Activated B cell treated with CpG ODN at 0.5 μM for 24 hours (primary cell): ENCODE measurements at regions of chr2 and their contacts with region 1.

Region 1: GRCh38 chr2:68909793-68910674 is 38.8 kb upstream of the BMP10 start:
- DNase-seq: peak; percentile 45
- ATAC-seq: peak; percentile 58
- H3K4me3 Mint-ChIP-seq: no peak overlapping the region
- H3K27ac Mint-ChIP-seq: peak overlapping the region; percentile 60
- H3K4me1 Mint-ChIP-seq: peaks cover 34% of the 10 kb centered on the region
- H3K27me3 Mint-ChIP-seq: no peaks in the 10 kb centered on the region
- CTCF ChIP-seq: no peak

Region 2: DNA sequence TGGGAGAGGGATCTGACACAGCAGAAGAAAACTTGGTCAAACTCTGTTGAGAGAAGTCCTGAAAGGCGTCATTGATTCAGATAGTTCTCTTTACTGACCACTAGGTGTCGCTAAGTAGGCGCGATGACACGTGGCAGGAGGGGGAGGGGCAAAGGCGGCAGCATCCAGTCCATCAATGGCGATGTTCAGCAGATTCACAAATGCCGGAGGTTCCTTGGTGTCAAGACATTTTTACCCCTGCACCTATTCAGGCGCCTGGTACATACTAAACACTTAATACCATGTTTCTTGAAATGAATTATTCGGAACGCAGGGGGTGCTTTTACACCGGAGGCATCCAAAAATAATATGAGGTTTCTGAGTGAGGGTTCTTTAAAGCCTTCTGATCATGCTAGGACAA is 548.0 kb before region 1 on chr2:
- CTCF ChIA-PET with region 1: no interaction called
- POLR2A ChIA-PET with region 1: no interaction called
- intact Hi-C with region 1: loop called (anchors 5 kb)
- DNase-seq: peak; percentile 63
- ATAC-seq: peak; percentile 66
- H3K4me3 Mint-ChIP-seq: peak overlapping the region; percentile 84
- H3K27ac Mint-ChIP-seq: peak overlapping the region; percentile 91
- H3K4me1 Mint-ChIP-seq: peaks cover 56% of the 10 kb centered on the region
- H3K27me3 Mint-ChIP-seq: no peaks in the 10 kb centered on the region
- CTCF ChIP-seq: peak; percentile 33

Region 3: GRCh38 chr2:68709421-68709911 is 200.6 kb before region 1 on chr2:
- CTCF ChIA-PET with region 1: interaction called, 72 read pairs
- POLR2A ChIA-PET with region 1: interaction called, 9 read pairs
- intact Hi-C with region 1: loop called (anchors 1 kb)
- DNase-seq: no peak
- ATAC-seq: peak; percentile 71
- H3K4me3 Mint-ChIP-seq: no peak overlapping the region
- H3K27ac Mint-ChIP-seq: peak overlapping the region; percentile 6
- H3K4me1 Mint-ChIP-seq: peaks cover 39% of the 10 kb centered on the region
- H3K27me3 Mint-ChIP-seq: no peaks in the 10 kb centered on the region
- CTCF ChIP-seq: peak; percentile 51

Region 4: DNA sequence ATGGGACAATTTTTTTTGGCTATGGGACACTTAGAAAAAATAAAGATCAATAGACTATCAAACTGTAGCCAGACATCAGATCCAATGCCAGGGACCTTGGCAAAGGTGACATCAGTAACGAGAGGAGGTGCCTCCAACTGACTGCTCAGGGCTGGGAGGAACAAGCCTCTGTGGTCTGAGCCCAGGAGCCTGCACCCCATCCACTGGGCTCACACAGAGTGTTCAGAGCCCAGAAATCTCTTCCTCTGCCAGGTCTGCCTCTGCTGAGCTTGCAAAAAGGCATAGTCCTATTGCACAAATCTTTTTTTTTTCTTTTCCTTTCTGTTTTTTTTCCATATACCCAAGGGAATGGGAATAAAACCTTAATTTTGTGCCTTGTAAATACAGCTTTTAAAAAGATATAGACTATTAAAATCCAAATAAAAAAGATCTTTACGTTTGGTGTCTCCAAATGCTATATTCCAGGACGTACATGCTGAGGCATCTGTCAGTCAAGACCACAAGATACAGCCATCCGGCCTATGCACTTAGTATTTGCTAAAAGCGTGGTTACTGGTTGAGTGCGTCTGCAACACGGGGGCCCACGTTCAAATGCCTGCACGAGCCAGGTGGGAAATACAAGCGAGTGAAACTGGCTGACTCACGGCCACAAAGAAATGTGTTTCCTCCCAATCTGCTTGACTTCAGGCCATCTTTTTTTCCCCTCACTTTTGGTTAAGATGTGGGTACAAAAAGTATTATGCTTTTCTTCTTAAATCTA is 183.2 kb before region 1 on chr2:
- CTCF ChIA-PET with region 1: interaction called, 4 read pairs
- POLR2A ChIA-PET with region 1: interaction called, 11 read pairs
- intact Hi-C with region 1: loop called (anchors 1 kb)
- DNase-seq: peak; percentile 52
- ATAC-seq: peak; percentile 95
- H3K4me3 Mint-ChIP-seq: peak overlapping the region; percentile 29
- H3K27ac Mint-ChIP-seq: peak overlapping the region; percentile 78
- H3K4me1 Mint-ChIP-seq: peaks cover 49% of the 10 kb centered on the region
- H3K27me3 Mint-ChIP-seq: no peaks in the 10 kb centered on the region
- CTCF ChIP-seq: no peak

Region 5: DNA sequence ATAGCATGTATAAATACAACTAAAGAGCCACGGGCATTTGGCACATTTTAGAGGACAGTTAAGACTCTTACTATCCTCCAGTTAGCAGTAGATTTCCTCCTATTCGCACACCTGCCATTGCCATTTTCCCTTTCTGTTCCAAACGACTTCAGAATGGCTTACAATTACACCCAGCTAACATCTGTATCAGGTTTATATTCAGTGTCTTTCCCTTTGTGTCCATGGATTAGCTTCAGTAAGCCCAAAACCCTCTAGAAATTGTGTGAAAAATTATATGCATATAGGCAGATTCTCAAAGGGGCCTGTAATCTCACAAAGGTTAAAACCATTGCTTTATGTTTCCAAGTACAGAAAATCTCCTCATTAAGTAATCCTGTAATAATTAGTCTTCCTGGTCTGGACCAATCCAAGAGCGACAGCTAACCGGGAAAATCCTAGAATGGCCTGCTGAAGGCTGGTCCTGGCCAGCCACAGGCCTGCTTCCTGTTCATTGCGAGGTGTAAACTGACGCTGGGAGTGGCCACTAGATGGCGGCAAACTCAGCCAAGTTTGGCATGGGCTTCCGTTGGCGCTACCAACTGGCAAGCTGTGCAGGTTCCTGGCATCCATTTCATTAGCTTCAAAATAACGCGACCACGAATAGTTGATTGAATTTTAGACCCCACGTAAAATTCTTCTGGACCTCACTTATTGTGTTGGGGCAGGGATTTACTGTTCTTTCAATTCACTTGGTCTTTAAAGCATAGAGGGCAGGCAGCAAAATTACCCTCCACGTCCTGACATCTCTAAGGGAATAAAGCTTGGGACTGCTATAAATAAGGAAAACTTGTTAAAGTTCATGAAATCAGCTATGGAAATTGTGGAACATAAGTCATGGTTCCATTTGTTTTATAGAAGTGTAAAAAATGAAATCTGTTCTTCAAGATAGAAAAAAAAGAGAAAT is 158.4 kb before region 1 on chr2:
- CTCF ChIA-PET with region 1: interaction called, 71 read pairs
- POLR2A ChIA-PET with region 1: interaction called, 37 read pairs
- intact Hi-C with region 1: loop called (anchors 1 kb)
- DNase-seq: peak; percentile 79
- ATAC-seq: peak; percentile 92
- H3K4me3 Mint-ChIP-seq: peak overlapping the region; percentile 62
- H3K27ac Mint-ChIP-seq: peak overlapping the region; percentile 92
- H3K4me1 Mint-ChIP-seq: peaks cover 83% of the 10 kb centered on the region
- H3K27me3 Mint-ChIP-seq: no peaks in the 10 kb centered on the region
- CTCF ChIP-seq: peak; percentile 67

Region 6: DNA sequence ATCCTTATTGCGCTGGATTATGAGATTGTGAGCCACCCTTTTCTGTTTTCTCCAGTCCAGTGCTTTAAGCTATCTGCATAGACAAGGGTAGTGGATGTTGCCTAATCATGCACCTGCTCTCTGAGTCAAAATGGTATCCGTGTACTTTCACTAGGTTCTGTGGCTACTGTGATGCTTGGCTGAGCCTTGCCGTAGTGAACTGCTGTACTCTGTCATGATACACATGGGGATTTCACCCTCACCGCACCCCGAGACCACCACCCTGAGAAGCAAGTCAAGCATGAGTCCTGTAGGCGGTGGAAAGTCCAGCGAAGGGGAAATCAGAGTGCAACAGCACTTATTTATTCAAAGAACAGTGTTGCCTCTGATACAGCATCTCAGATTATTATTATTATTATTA is 120.4 kb before region 1 on chr2:
- CTCF ChIA-PET with region 1: interaction called, 7 read pairs
- POLR2A ChIA-PET with region 1: interaction called, 79 read pairs
- intact Hi-C with region 1: loop called (anchors 1 kb)
- DNase-seq: peak; percentile 75
- ATAC-seq: peak; percentile 87
- H3K4me3 Mint-ChIP-seq: peak overlapping the region; percentile 61
- H3K27ac Mint-ChIP-seq: no peak overlapping the region
- H3K4me1 Mint-ChIP-seq: peaks cover 47% of the 10 kb centered on the region
- H3K27me3 Mint-ChIP-seq: no peaks in the 10 kb centered on the region
- CTCF ChIP-seq: no peak

Region 7: DNA sequence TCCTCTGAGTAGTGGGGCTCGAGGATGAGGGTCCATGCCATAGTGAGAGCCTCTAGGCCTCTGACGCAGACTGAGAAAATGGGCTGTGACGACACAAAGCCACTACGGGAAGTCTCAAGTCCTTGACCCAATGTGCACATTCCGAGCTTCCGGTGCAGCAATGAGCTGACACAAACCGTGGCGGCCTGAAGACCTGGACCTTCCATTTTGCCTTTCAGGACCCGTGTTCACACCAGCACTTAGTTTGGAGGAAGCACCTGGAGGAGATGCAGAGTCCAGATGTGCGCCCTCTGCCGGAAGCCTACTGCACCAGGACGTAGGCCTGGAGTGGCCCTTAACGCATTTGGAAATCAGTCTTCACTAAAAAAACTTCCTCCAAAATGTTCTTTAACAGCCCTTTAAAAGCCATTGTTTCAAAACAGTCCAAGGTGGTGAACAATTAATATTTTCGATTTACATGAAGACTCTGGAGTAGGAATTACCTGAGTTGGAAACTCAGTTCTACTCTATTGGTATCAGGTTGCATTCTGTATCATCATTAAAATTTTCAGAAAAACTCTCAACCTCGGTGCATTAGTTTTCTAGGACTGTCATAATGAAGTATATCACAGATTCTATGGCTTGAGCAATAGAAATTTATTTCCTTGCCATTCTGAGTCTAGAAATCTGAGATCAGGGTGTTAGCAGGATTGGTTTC is 72.7 kb before region 1 on chr2:
- CTCF ChIA-PET with region 1: interaction called, 21 read pairs
- POLR2A ChIA-PET with region 1: interaction called, 74 read pairs
- intact Hi-C with region 1: loop called (anchors 1 kb)
- DNase-seq: peak; percentile 53
- ATAC-seq: peak; percentile 33
- H3K4me3 Mint-ChIP-seq: no peak overlapping the region
- H3K27ac Mint-ChIP-seq: peak overlapping the region; percentile 74
- H3K4me1 Mint-ChIP-seq: peaks cover 57% of the 10 kb centered on the region
- H3K27me3 Mint-ChIP-seq: no peaks in the 10 kb centered on the region
- CTCF ChIP-seq: no peak